Calu3 (cell line): ENCODE measurements at regions of chr2 and their contacts with region 1.

Region 1: GRCh38 chr2:64144057-64145013 is at the start of gene PELI1:
- DNase-seq: peak; percentile 99
- H3K4me3 Mint-ChIP-seq: peak within 1 kb of the TSS; percentile 94
- H3K27ac Mint-ChIP-seq: peak within 1 kb of the TSS; percentile 96
- H3K4me1 Mint-ChIP-seq: peaks cover 14% of the 10 kb centered on the region
- H3K27me3 Mint-ChIP-seq: no peaks in the 10 kb centered on the region
- CTCF ChIP-seq: peak; percentile 21
- total RNA-seq, gene PELI1: 26.2 and 27.3 TPM in 2 replicates

Region 2: GRCh38 chr2:64045938-64046337 is 98.4 kb before region 1 on chr2:
- CTCF ChIA-PET with region 1: no interaction called
- intact Hi-C with region 1: loop called (anchors 5 kb)
- DNase-seq: no peak
- H3K4me3 Mint-ChIP-seq: no peak overlapping the region
- H3K27ac Mint-ChIP-seq: no peak overlapping the region
- H3K4me1 Mint-ChIP-seq: peaks cover 8% of the 10 kb centered on the region
- H3K27me3 Mint-ChIP-seq: no peaks in the 10 kb centered on the region
- CTCF ChIP-seq: no peak

Region 3: GRCh38 chr2:64105670-64106461 is 38.5 kb before region 1 on chr2:
- CTCF ChIA-PET with region 1: interaction called, 5 read pairs
- intact Hi-C with region 1: loop called (anchors 5 kb)
- DNase-seq: peak; percentile 37
- H3K4me3 Mint-ChIP-seq: peak overlapping the region; percentile 31
- H3K27ac Mint-ChIP-seq: peak overlapping the region; percentile 82
- H3K4me1 Mint-ChIP-seq: peaks cover 81% of the 10 kb centered on the region
- H3K27me3 Mint-ChIP-seq: no peaks in the 10 kb centered on the region
- CTCF ChIP-seq: no peak

Region 4: DNA sequence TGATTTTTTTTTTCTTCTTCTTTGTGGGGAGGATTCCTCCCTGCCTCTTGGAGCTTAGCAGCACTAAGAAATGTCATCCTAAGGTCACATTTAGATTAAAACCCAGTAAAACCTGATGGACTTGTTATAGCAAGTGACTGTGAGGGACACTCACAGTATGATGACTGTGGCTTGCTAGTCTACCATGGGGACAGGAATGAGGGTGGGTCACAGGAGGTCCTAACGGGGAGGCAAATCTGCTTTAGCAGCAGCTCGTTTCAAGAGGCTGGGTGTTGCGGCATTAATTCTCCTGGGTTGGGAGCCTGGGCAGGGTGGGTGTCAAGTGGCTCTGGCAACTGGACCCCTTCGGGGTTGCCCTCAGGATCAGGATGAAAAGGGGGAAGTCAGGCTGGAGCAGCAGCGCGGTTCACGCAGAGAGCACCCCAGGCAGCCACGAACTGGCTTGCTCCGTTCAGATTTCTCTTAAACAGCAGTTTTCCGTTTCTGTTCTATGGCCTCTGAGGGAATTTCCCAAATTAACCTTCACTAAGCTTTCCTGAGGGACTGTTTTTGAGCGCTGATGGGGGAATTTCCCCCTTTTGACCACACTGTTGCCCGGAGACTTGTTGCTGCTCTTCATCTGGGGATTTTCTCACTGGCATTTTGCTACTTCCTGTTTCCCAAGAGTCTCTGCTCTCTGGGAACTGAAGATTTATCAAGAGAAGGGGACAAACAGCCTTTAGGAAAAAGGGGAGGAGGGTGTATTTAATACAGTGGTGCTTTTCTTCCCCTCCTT is 59.7 kb after region 1 on chr2:
- CTCF ChIA-PET with region 1: no interaction called
- intact Hi-C with region 1: loop called (anchors 2 kb)
- DNase-seq: peak; percentile 49
- H3K4me3 Mint-ChIP-seq: peak overlapping the region; percentile 65
- H3K27ac Mint-ChIP-seq: peak overlapping the region; percentile 99
- H3K4me1 Mint-ChIP-seq: peaks cover 19% of the 10 kb centered on the region
- H3K27me3 Mint-ChIP-seq: no peaks in the 10 kb centered on the region
- CTCF ChIP-seq: no peak

Region 5: GRCh38 chr2:64277101-64277849 is 132.9 kb after region 1 on chr2:
- CTCF ChIA-PET with region 1: no interaction called
- intact Hi-C with region 1: loop called (anchors 5 kb)
- DNase-seq: peak; percentile 54
- H3K4me3 Mint-ChIP-seq: no peak overlapping the region
- H3K27ac Mint-ChIP-seq: peak overlapping the region; percentile 18
- H3K4me1 Mint-ChIP-seq: peaks cover 57% of the 10 kb centered on the region
- H3K27me3 Mint-ChIP-seq: no peaks in the 10 kb centered on the region
- CTCF ChIP-seq: no peak

Region 6: GRCh38 chr2:64311948-64312621 is 167.8 kb after region 1 on chr2:
- CTCF ChIA-PET with region 1: interaction called, 4 read pairs
- intact Hi-C with region 1: loop called (anchors 5 kb)
- DNase-seq: peak; percentile 79
- H3K4me3 Mint-ChIP-seq: peak overlapping the region; percentile 40
- H3K27ac Mint-ChIP-seq: peak overlapping the region; percentile 27
- H3K4me1 Mint-ChIP-seq: peaks cover 21% of the 10 kb centered on the region
- H3K27me3 Mint-ChIP-seq: peaks cover 13% of the 10 kb centered on the region
- CTCF ChIP-seq: peak; percentile 35

Region 7: DNA sequence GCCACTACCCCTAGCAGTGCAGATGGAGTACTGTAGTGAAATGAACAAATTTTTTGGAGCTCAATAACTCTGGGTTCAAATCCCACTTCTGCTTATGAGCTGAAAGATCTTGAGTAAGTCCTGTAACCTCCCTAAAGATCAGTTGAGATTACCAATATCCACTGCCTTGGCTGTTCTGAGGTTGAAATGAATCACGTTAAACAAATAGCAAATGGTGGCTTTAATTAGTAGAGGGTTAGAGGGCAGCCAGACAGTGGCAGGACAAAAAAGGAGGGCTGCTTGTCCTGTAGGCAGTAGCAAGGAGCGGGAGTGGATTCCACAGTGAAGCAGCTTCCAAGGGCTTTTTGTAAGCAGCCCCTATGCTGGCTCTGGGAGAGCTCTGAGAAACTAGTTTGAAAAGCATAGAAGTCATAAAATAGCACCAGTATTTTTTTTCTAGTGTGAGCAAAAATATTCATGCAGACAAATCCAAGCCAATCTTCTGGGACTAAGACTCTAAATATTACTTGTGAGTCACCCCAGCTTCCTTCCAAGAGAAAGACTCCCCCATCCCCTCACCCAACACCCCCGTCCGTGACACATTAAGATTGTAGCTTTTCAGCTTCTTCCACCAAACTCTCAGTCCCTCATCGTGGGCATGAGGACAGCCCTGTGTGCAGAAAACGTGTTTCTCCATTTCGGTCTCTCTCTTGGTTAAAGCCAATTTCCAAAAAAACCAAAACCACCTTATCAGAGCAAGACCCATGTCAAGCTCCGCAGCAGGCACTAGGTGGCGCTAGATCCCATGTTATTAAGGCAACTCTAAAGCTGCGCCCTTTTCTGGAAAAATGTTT is 186.2 kb after region 1 on chr2:
- CTCF ChIA-PET with region 1: interaction called, 3 read pairs
- intact Hi-C with region 1: loop called (anchors 5 kb)
- DNase-seq: peak; percentile 74
- H3K4me3 Mint-ChIP-seq: peak overlapping the region; percentile 56
- H3K27ac Mint-ChIP-seq: no peak overlapping the region
- H3K4me1 Mint-ChIP-seq: peaks cover 18% of the 10 kb centered on the region
- H3K27me3 Mint-ChIP-seq: no peaks in the 10 kb centered on the region
- CTCF ChIP-seq: peak; percentile 84